Mucosa of descending colon (tissue), 3 donors: ENCODE measurements at regions of chr12 and their contacts with region 1.

Region 1: GRCh38 chr12:50986966-50987737 is 34.8 kb downstream of the HIGD1C start:
- DNase-seq: peak in 1 of 3 donors; percentile 85
- ATAC-seq: peak; percentile 96
- H3K4me3 ChIP-seq: no peak overlapping the region
- H3K4me1 ChIP-seq: peaks cover 9% of the 10 kb centered on the region
- CTCF ChIP-seq: no peak

Region 2: GRCh38 chr12:50637870-50638481 is 349.2 kb before region 1 on chr12:
- intact Hi-C with region 1: no loop called
- DNase-seq: no peak
- ATAC-seq: peak; percentile 57
- H3K4me3 ChIP-seq: no peak overlapping the region
- H3K4me1 ChIP-seq: peaks cover 9% of the 10 kb centered on the region
- CTCF ChIP-seq: peak; percentile 30

Region 3: DNA sequence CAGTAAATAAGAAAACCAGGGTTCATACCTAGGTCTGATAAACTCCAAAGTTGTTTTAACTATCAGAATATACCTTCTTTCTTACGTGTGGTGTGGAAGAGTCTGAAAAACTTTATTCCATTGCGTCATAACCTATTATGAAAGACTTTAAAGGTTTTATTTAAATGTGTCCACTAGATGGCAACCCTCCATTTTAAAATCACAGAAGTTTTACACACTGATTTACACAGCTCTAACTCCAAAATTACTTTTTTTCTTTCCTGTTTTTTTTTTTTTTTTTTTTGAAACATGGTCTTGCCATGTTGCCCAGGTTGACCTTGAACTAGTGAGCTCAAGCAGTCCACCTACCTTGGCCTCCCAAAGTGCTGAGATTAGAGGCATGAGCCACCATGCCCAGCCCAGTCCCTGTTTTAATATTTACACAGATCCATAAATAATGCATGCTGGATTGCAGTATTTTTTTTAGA is 161.7 kb before region 1 on chr12:
- intact Hi-C with region 1: loop called (anchors 2 to 5 kb)
- DNase-seq: no peak
- ATAC-seq: peak; percentile 91
- H3K4me3 ChIP-seq: no peak overlapping the region
- H3K4me1 ChIP-seq: no peaks in the 10 kb centered on the region
- CTCF ChIP-seq: no peak

Region 4: DNA sequence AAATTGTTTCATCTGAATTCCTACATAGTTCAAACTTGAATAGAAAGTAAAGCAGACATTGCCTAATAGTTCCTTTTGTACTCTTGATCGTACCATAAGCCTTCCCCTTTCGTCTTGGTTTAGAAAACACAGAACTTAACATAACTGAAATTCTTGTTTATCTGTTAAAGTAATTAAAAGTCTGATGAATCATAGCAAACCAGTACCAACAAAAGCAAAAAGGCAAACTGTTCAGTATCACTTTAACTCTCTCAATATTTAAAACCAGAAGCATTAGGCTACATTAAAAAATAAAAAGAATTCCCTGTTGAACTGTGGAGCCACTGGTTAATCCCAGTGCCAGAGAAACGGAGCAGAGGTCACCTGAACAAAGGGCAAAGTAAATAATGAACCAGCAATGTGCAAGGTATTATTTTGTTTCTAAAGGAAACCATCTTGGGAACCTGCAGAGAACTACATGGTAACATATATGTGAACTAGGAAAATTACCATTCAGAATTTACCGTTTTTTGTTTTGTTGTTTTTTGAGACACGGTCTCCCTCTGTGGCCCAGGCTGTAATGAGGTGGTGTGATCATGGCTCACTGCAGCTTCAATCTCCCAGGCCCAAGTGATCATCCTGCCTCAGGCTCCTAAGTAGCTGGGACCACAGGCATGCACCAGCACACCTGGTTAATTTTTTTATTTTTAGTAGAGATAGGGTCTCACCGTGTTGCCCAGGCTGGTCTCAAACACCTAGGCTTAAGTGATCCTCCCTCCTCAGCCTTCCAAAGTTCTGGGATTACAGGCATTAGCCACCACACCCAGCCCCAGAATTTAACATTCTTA is 52.0 kb before region 1 on chr12:
- intact Hi-C with region 1: loop called in 1 of 2 experiments (anchors 10 kb)
- DNase-seq: no peak
- ATAC-seq: peak; percentile 45
- H3K4me3 ChIP-seq: no peak overlapping the region
- H3K4me1 ChIP-seq: peaks cover 49% of the 10 kb centered on the region
- CTCF ChIP-seq: no peak

Region 5: DNA sequence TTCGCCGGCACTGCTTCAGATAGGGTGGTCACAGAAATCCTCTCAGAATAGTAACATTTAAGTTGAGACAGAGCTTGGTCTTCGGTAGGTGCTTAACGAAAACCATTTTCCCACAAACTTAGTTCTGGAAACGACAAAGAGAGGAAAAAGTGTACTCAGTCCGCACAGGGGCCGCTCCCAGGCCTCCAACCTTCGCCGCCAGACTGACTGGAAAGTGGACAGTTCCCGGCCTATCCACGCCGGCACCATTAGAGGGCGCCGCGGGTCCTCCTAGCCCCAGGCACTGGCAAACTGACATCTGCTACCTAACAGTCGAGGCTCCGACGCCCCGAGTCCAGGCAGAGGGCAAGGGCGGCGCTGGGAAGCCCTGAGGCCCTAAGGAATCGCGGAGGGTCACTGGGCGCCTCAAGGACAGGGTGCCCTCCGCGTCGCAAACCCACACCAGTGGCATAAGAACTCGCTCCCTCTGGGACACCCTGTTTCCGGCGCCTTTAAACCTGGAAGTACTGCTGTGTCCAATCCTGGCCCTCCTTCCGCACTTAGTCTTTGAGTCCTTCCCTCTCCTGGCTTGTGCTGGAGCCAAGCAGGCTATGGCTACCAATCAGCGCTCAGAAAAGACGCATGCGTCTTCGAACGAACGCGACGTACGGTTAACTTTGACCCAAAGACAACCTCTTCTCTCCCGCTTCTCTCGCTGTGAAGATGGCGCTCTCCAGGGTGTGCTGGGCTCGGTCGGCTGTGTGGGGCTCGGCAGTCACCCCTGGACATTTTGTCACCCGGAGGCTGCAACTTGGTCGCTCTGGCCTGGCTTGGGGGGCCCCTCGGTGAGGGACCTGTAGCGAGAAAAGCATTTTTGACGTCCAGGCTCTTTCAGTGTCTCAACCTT is 60.7 kb after region 1 on chr12 and contains the start of gene LETMD1:
- intact Hi-C with region 1: no loop called
- DNase-seq: peak; percentile 92 to 94 (median 93)
- ATAC-seq: peak; percentile 98
- H3K4me3 ChIP-seq: peak within 1 kb of the TSS; percentile 40
- H3K4me1 ChIP-seq: peaks cover 20% of the 10 kb centered on the region
- CTCF ChIP-seq: peak; percentile 88
- total RNA-seq, gene LETMD1: 67.4 to 74.2 (median 72.7) TPM